Activated CD4-positive, alpha-beta T cell treated with anti-CD3 and anti-CD28 coated beads for 36 hours (primary cell): ENCODE measurements at regions of chr6 and their contacts with region 1.

Region 1: GRCh38 chr6:111483736-111484632 is 966 bp upstream of the REV3L start:
- DNase-seq: peak; percentile 92
- ATAC-seq: peak; percentile 52
- H3K4me3 Mint-ChIP-seq: peak overlapping the region; percentile 94
- H3K27ac Mint-ChIP-seq: peak overlapping the region; percentile 100
- H3K4me1 Mint-ChIP-seq: peaks cover 60% of the 10 kb centered on the region
- H3K27me3 Mint-ChIP-seq: no peaks in the 10 kb centered on the region

Region 2: DNA sequence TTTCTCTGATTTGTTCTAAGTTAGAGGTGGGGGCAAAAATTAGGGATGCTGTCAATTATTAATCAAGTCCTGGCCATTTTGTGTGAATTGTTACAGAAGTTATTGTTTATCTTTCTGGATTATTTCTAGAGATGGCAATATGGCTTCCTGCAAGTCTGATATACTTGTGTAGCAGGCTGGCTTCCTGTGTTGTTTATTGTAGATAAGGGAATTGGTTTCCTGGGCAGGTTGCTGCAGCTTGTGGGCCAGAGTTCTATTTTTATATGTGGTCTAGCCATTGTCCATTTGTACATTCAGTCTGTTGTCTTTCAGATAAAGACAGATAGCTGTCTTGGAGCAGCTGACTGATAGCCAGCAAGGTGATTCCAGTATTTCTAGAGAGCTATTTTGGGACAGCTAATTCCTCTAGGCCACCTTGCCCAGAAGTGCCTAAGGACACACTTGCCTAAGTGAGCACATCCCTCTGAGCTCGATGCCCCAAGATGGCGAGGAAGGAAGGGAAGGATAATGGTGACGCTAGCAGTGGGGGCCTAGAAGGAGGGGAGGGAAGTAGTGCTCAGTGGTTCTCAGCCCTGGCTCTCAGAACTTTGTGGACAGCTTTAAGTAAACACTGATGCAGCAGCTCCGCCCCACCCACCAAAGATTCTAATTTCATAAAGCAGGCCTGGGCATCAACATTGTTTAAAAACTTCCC is 1094.1 kb before region 1 on chr6:
- CTCF ChIA-PET with region 1: no interaction called
- POLR2A ChIA-PET with region 1: no interaction called
- intact Hi-C with region 1: no loop called
- DNase-seq: no peak
- ATAC-seq: no peak
- H3K4me3 Mint-ChIP-seq: no peak overlapping the region
- H3K27ac Mint-ChIP-seq: no peak overlapping the region
- H3K4me1 Mint-ChIP-seq: peaks cover 19% of the 10 kb centered on the region
- H3K27me3 Mint-ChIP-seq: no peaks in the 10 kb centered on the region

Region 3: GRCh38 chr6:110815217-110816109 is 668.5 kb before region 1 on chr6 and contains the start of gene CDK19:
- CTCF ChIA-PET with region 1: no interaction called
- POLR2A ChIA-PET with region 1: no interaction called
- intact Hi-C with region 1: loop called (anchors 1 to 5 kb)
- DNase-seq: peak; percentile 99
- ATAC-seq: peak; percentile 85
- H3K4me3 Mint-ChIP-seq: peak within 1 kb of the TSS; percentile 88
- H3K27ac Mint-ChIP-seq: peak within 1 kb of the TSS; percentile 98
- H3K4me1 Mint-ChIP-seq: peaks cover 32% of the 10 kb centered on the region
- H3K27me3 Mint-ChIP-seq: no peaks in the 10 kb centered on the region
- total RNA-seq, gene CDK19: 14.7 to 15.7 TPM

Region 4: GRCh38 chr6:111087106-111087835 is 396.7 kb before region 1 on chr6 and contains the start of gene SLC16A10:
- CTCF ChIA-PET with region 1: no interaction called
- POLR2A ChIA-PET with region 1: no interaction called
- intact Hi-C with region 1: loop called in 1 of 2 experiments (anchors 2 kb)
- DNase-seq: peak; percentile 87
- ATAC-seq: peak; percentile 90
- H3K4me3 Mint-ChIP-seq: peak within 1 kb of the TSS; percentile 91
- H3K27ac Mint-ChIP-seq: peak within 1 kb of the TSS; percentile 90
- H3K4me1 Mint-ChIP-seq: peaks cover 37% of the 10 kb centered on the region
- H3K27me3 Mint-ChIP-seq: no peaks in the 10 kb centered on the region
- total RNA-seq, gene SLC16A10: 6.2 to 7.0 TPM

Region 5: GRCh38 chr6:111406200-111406721 is 77.7 kb before region 1 on chr6:
- CTCF ChIA-PET with region 1: interaction called, 3 read pairs
- POLR2A ChIA-PET with region 1: no interaction called
- intact Hi-C with region 1: loop called in 1 of 2 experiments (anchors 5 kb)
- DNase-seq: peak; percentile 5
- ATAC-seq: peak; percentile 97
- H3K4me3 Mint-ChIP-seq: no peak overlapping the region
- H3K27ac Mint-ChIP-seq: peak overlapping the region; percentile 63
- H3K4me1 Mint-ChIP-seq: peaks cover 19% of the 10 kb centered on the region
- H3K27me3 Mint-ChIP-seq: no peaks in the 10 kb centered on the region

Region 6: DNA sequence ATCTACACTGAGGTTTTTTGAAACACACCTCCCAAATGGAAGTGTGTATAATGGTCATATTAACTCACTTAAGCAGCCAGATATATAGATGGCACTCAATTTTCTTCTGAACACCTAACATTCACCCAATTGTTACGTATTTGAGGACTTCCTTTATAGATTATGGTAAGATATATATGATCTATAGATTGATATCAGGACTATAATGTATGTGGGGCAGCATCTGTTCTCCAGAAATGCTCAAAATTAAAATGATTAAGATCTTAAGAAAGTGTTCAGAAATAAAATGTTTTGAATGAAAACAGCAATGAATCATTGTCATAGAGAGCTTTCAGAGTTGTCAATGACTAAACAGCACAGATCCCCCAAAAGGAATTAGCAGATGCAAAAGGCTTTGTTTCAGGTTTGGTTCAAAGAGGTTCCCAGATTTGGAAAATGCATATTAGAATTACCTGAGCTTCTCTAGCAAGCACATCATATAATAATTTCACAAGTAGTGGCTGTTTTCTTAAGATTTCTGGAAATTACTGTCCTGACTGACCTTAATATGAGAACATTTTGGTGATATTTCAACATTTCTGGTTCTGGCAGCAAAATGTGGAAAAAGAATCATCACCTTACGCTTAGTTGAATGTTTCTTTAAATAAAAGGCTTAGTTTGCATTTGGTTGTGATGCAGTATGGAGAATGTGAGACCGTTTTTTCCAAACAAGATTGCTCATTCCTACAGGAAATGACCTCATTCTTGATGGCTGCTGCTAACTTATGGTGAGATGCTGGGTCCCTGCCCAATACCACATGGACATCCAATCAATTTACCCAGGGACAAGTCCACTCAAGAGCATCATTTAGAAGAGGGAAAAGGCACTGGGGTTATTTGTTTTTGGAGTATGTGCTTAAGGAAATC is 90.2 kb after region 1 on chr6:
- CTCF ChIA-PET with region 1: no interaction called
- POLR2A ChIA-PET with region 1: interaction called, 3 read pairs
- intact Hi-C with region 1: loop called (anchors 1 to 2 kb)
- DNase-seq: peak; percentile 36
- ATAC-seq: peak; percentile 77
- H3K4me3 Mint-ChIP-seq: no peak overlapping the region
- H3K27ac Mint-ChIP-seq: peak overlapping the region; percentile 72
- H3K4me1 Mint-ChIP-seq: peaks cover 24% of the 10 kb centered on the region
- H3K27me3 Mint-ChIP-seq: no peaks in the 10 kb centered on the region

Region 7: DNA sequence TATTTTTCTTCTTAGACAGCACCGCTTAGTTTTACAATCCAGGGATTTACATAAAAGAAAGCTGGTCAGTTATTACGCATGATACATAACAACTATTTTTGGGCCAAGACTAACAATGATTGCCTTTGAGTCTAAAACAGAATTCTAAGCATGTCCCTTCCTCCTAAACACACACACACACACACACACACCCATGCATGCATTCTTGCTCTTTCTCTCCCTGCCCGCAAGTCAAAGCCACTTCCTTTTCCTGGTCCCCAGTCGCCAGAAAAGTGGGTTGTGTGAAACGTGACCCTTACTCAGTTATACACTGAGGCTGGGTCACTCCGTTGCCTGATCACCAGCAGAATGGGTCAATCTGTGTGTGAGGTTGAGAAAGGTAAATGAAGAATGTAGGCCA is 357.8 kb after region 1 on chr6:
- CTCF ChIA-PET with region 1: no interaction called
- POLR2A ChIA-PET with region 1: no interaction called
- intact Hi-C with region 1: loop called (anchors 10 kb)
- DNase-seq: peak; percentile 67
- ATAC-seq: no peak
- H3K4me3 Mint-ChIP-seq: no peak overlapping the region
- H3K27ac Mint-ChIP-seq: no peak overlapping the region
- H3K4me1 Mint-ChIP-seq: peaks cover 63% of the 10 kb centered on the region
- H3K27me3 Mint-ChIP-seq: no peaks in the 10 kb centered on the region

Region 8: GRCh38 chr6:112043032-112044007 is 559.3 kb after region 1 on chr6:
- CTCF ChIA-PET with region 1: interaction called, 5 read pairs
- POLR2A ChIA-PET with region 1: no interaction called
- intact Hi-C with region 1: loop called (anchors 1 kb)
- DNase-seq: peak; percentile 96
- ATAC-seq: peak; percentile 91
- H3K4me3 Mint-ChIP-seq: peak overlapping the region; percentile 93
- H3K27ac Mint-ChIP-seq: peak overlapping the region; percentile 98
- H3K4me1 Mint-ChIP-seq: peaks cover 50% of the 10 kb centered on the region
- H3K27me3 Mint-ChIP-seq: no peaks in the 10 kb centered on the region